Endothelial cell of umbilical vein (primary cell): ENCODE measurements at regions of chr11 and their contacts with region 1.

Region 1: DNA sequence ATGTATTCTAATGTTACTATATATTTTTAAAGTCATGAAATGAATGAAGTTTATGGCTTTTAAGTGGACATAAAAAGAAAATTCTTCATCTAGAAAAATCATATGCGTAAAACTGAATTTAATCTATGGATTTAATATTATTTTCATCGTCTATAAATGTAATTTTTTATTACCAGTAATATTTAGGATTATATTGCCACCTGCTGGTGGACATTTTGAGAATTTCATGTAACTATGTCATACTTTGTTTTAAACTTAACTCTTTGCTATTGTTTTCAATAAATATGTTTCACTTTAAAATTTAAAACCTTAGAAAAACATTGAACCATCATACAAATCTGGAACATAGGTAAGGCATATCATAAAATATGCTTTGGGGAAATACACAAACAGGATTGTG is 66.5 kb upstream of the CEP126 start:
- DNase-seq: peak; percentile 8
- H3K4me3 ChIP-seq: no peak overlapping the region
- H3K27ac ChIP-seq: no peak overlapping the region
- H3K4me1 ChIP-seq: no peaks in the 10 kb centered on the region
- H3K27me3 ChIP-seq: no peaks in the 10 kb centered on the region
- CTCF ChIP-seq: peak in 1 of 2 donors; percentile 15
- POLR2A ChIP-seq: no peak

Region 2: GRCh38 chr11:100930185-100930778 is 918.0 kb before region 1 on chr11:
- CTCF ChIA-PET with region 1: no interaction called
- POLR2A ChIA-PET with region 1: no interaction called
- dilution Hi-C with region 1: no loop called
- intact Hi-C with region 1: loop called (anchors 10 kb)
- DNase-seq: peak; percentile 64
- H3K4me3 ChIP-seq: no peak overlapping the region
- H3K27ac ChIP-seq: no peak overlapping the region
- H3K4me1 ChIP-seq: peaks cover 4% of the 10 kb centered on the region
- H3K27me3 ChIP-seq: no peaks in the 10 kb centered on the region
- CTCF ChIP-seq: peak; percentile 44 to 49
- POLR2A ChIP-seq: no peak

Region 3: GRCh38 chr11:101390539-101390938 is 457.7 kb before region 1 on chr11:
- CTCF ChIA-PET with region 1: no interaction called
- POLR2A ChIA-PET with region 1: no interaction called
- dilution Hi-C with region 1: no loop called
- intact Hi-C with region 1: loop called (anchors 2 kb)
- DNase-seq: no peak
- H3K4me3 ChIP-seq: no peak overlapping the region
- H3K27ac ChIP-seq: no peak overlapping the region
- H3K4me1 ChIP-seq: no peaks in the 10 kb centered on the region
- H3K27me3 ChIP-seq: no peaks in the 10 kb centered on the region
- CTCF ChIP-seq: no peak
- POLR2A ChIP-seq: no peak

Region 4: DNA sequence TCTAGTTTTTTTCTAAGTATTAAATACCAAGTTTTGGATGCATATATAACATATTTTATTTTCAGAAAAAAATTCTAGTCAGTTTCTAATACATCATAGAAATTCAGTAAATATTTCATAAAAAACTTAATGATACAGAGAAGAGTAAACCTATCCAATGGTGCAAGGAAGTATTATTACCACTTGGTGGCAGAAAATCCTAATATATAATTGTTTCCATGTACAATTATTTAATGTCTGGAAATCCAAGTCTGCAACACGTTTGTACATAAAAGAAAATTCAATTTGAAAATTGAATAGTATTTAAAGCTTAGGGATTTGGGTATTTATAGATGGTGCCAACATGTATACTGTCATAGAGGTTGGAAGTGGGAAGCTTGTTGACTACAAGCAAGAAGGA is 391.4 kb before region 1 on chr11:
- CTCF ChIA-PET with region 1: interaction called, 3 read pairs
- POLR2A ChIA-PET with region 1: no interaction called
- dilution Hi-C with region 1: no loop called
- intact Hi-C with region 1: loop called (anchors 2 kb)
- DNase-seq: no peak
- H3K4me3 ChIP-seq: no peak overlapping the region
- H3K27ac ChIP-seq: no peak overlapping the region
- H3K4me1 ChIP-seq: no peaks in the 10 kb centered on the region
- H3K27me3 ChIP-seq: no peaks in the 10 kb centered on the region
- CTCF ChIP-seq: no peak
- POLR2A ChIP-seq: no peak

Region 5: GRCh38 chr11:101706541-101706940 is 141.7 kb before region 1 on chr11:
- CTCF ChIA-PET with region 1: no interaction called
- POLR2A ChIA-PET with region 1: no interaction called
- dilution Hi-C with region 1: no loop called
- intact Hi-C with region 1: no loop called
- DNase-seq: no peak
- H3K4me3 ChIP-seq: no peak overlapping the region
- H3K27ac ChIP-seq: no peak overlapping the region
- H3K4me1 ChIP-seq: no peaks in the 10 kb centered on the region
- H3K27me3 ChIP-seq: no peaks in the 10 kb centered on the region
- CTCF ChIP-seq: no peak
- POLR2A ChIP-seq: no peak

Region 6: GRCh38 chr11:101929294-101929916 is 81.1 kb after region 1 on chr11:
- CTCF ChIA-PET with region 1: no interaction called
- POLR2A ChIA-PET with region 1: no interaction called
- dilution Hi-C with region 1: no loop called
- intact Hi-C with region 1: no loop called
- DNase-seq: no peak
- H3K4me3 ChIP-seq: no peak overlapping the region
- H3K27ac ChIP-seq: no peak overlapping the region
- H3K4me1 ChIP-seq: no peaks in the 10 kb centered on the region
- H3K27me3 ChIP-seq: no peaks in the 10 kb centered on the region
- CTCF ChIP-seq: no peak
- POLR2A ChIP-seq: no peak

Region 7: GRCh38 chr11:102007567-102008437 is 159.5 kb after region 1 on chr11:
- CTCF ChIA-PET with region 1: interaction called, 21 read pairs
- POLR2A ChIA-PET with region 1: no interaction called
- dilution Hi-C with region 1: no loop called
- intact Hi-C with region 1: no loop called
- DNase-seq: peak; percentile 78
- H3K4me3 ChIP-seq: no peak overlapping the region
- H3K27ac ChIP-seq: no peak overlapping the region
- H3K4me1 ChIP-seq: peaks cover 15% of the 10 kb centered on the region
- H3K27me3 ChIP-seq: no peaks in the 10 kb centered on the region
- CTCF ChIP-seq: peak; percentile 7 to 15
- POLR2A ChIP-seq: peak; percentile 17